RWPE1 (cell line): ENCODE measurements at regions of chr1 and their contacts with region 1.

Region 1: GRCh38 chr1:37940283-37940947 is 6.4 kb downstream of the INPP5B start:
- DNase-seq: no peak
- H3K27ac ChIP-seq: no peak overlapping the region
- CTCF ChIP-seq: no peak

Region 2: DNA sequence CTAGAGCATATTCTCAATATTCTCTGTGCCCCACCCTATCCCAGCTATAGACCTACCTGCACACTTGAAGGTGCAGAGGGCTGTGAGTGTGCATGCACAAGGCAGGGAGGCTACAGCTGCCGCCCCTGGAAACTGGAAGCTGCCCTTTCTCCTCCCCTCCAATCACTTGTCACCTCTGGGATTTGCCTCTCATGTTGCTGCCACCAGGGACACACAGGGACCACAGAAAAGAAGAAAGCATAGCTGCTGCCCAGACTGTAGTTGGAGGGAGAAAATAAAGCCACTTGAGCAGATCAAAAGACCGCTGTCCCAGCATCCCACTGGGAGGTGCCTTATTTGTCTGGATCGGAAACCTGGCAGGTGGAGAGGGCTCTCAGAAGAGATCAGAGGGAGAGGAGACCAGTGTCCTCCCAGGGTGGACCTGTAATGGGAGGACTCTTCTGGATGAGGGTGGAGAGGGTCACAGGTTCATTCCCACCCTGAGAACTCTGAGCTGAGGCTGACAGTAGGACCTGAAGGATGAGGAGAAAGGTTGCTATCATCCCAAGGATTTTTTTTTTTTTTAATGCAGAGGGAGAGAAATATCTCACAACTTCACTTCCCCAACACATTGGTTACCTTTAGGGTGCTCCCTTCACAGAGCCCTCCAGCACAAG is 14.0 kb after region 1 on chr1:
- CTCF ChIA-PET with region 1: no interaction called
- POLR2A ChIA-PET with region 1: no interaction called
- DNase-seq: no peak
- H3K27ac ChIP-seq: no peak overlapping the region
- CTCF ChIP-seq: no peak

Region 3: GRCh38 chr1:39637361-39637760 is 1696.9 kb after region 1 on chr1:
- CTCF ChIA-PET with region 1: no interaction called
- POLR2A ChIA-PET with region 1: interaction called, 13 read pairs
- DNase-seq: no peak
- H3K27ac ChIP-seq: no peak overlapping the region
- CTCF ChIP-seq: no peak